A549 (cell line): ENCODE measurements at regions of chr2 and their contacts with region 1.

Region 1: DNA sequence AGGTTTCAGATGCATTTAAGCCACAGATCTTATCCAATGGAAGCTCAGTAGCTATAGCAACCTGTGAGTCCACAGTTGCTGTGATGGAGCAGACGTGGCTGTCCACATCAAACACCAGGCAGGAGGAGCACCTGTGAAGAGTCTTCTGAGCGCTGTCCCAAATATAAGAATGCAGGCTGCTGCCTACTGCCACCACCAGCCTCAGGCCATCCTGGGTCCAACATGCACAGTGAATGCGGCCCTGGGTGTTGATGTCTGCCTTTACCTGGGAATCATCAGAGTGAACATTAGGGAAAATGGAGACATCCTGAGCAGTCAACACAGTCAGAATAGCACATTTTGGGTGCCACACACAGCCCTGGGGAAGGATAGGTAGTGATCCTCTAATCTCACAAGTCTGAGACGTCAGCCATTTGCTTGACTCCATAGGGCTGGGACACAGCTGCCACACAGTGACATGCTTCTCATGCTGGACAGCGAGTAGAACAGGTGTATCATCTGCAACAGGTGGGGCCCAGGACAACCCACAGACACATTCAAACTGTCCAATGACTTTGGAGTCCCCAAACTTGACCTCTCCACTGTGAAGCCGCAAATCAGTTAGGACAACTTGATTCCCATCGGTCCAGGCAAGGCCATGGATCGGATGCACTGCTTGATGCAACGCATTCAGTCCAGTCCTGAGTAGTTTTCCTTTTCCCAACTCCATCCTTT is 8.2 kb downstream of the WDCP start:
- DNase-seq: no peak
- ATAC-seq: peak; percentile 23 to 64; a peak in 2 of 6 replicates
- H3K4me3 ChIP-seq: no peak overlapping the region
- H3K27ac ChIP-seq: no peak overlapping the region
- H3K4me1 ChIP-seq: 0 out of 3 replicates have a peak, but pooled peaks cover 2% of the 10 kb centered on the region
- CTCF ChIP-seq: no peak
- EP300 ChIP-seq: no peak
- POLR2A ChIP-seq: no peak
- RAD21 ChIP-seq: no peak

Region 2: GRCh38 chr2:24021193-24021998 is 17.5 kb before region 1 on chr2:
- CTCF ChIA-PET with region 1: interaction called, 19 read pairs
- POLR2A ChIA-PET with region 1: interaction called, 4 read pairs
- DNase-seq: peak; percentile 35 to 57
- ATAC-seq: peak; percentile 45 to 77
- H3K4me3 ChIP-seq: no peak overlapping the region
- H3K27ac ChIP-seq: peak overlapping the region; percentile 45 to 60; a peak in 5 of 6 replicates
- H3K4me1 ChIP-seq: peaks cover 47% of the 10 kb centered on the region
- CTCF ChIP-seq: peak; percentile 41
- EP300 ChIP-seq: no peak
- POLR2A ChIP-seq: no peak
- RAD21 ChIP-seq: peak; percentile 52 to 70; a peak in 4 of 5 replicates

Region 3: GRCh38 chr2:24075915-24076848 is 37.2 kb after region 1 on chr2 and contains the start of gene SF3B6:
- CTCF ChIA-PET with region 1: no interaction called
- POLR2A ChIA-PET with region 1: no interaction called
- DNase-seq: peak; percentile 92 to 99
- ATAC-seq: peak; percentile 91 to 94
- H3K4me3 ChIP-seq: peak within 1 kb of the TSS; percentile 82
- H3K27ac ChIP-seq: peak within 1 kb of the TSS; percentile 84 to 85
- H3K4me1 ChIP-seq: peaks cover 19% of the 10 kb centered on the region
- CTCF ChIP-seq: no peak
- EP300 ChIP-seq: no peak
- POLR2A ChIP-seq: peak; percentile 88
- RAD21 ChIP-seq: peak; percentile 28 to 31; a peak in 3 of 5 replicates
- polyA plus RNA-seq, gene SF3B6: 296 and 315 TPM in 2 replicates